Activated CD4-positive, alpha-beta T cell treated with anti-CD3 and anti-CD28 coated beads for 36 hours (primary cell): ENCODE measurements at regions of chr1 and their contacts with region 1.

Region 1: GRCh38 chr1:180178511-180179161 is 24.0 kb downstream of the QSOX1 start:
- DNase-seq: peak; percentile 80
- ATAC-seq: peak; percentile 61
- H3K4me3 Mint-ChIP-seq: no peak overlapping the region
- H3K27ac Mint-ChIP-seq: no peak overlapping the region
- H3K4me1 Mint-ChIP-seq: no peaks in the 10 kb centered on the region
- H3K27me3 Mint-ChIP-seq: no peaks in the 10 kb centered on the region

Region 2: GRCh38 chr1:179706339-179706941 is 472.2 kb before region 1 on chr1:
- CTCF ChIA-PET with region 1: interaction called, 10 read pairs
- POLR2A ChIA-PET with region 1: no interaction called
- intact Hi-C with region 1: loop called (anchors 1 to 5 kb)
- DNase-seq: peak; percentile 79
- ATAC-seq: peak; percentile 55
- H3K4me3 Mint-ChIP-seq: no peak overlapping the region
- H3K27ac Mint-ChIP-seq: peak overlapping the region; percentile 38
- H3K4me1 Mint-ChIP-seq: peaks cover 17% of the 10 kb centered on the region
- H3K27me3 Mint-ChIP-seq: no peaks in the 10 kb centered on the region

Region 3: GRCh38 chr1:179754042-179754624 is 424.5 kb before region 1 on chr1:
- CTCF ChIA-PET with region 1: no interaction called
- POLR2A ChIA-PET with region 1: no interaction called
- intact Hi-C with region 1: no loop called
- DNase-seq: no peak
- ATAC-seq: no peak
- H3K4me3 Mint-ChIP-seq: no peak overlapping the region
- H3K27ac Mint-ChIP-seq: no peak overlapping the region
- H3K4me1 Mint-ChIP-seq: no peaks in the 10 kb centered on the region
- H3K27me3 Mint-ChIP-seq: peaks cover 12% of the 10 kb centered on the region

Region 4: GRCh38 chr1:180070286-180070685 is 108.3 kb before region 1 on chr1:
- CTCF ChIA-PET with region 1: interaction called, 17 read pairs
- POLR2A ChIA-PET with region 1: no interaction called
- intact Hi-C with region 1: no loop called
- DNase-seq: no peak
- ATAC-seq: no peak
- H3K4me3 Mint-ChIP-seq: no peak overlapping the region
- H3K27ac Mint-ChIP-seq: no peak overlapping the region
- H3K4me1 Mint-ChIP-seq: no peaks in the 10 kb centered on the region
- H3K27me3 Mint-ChIP-seq: no peaks in the 10 kb centered on the region

Region 5: DNA sequence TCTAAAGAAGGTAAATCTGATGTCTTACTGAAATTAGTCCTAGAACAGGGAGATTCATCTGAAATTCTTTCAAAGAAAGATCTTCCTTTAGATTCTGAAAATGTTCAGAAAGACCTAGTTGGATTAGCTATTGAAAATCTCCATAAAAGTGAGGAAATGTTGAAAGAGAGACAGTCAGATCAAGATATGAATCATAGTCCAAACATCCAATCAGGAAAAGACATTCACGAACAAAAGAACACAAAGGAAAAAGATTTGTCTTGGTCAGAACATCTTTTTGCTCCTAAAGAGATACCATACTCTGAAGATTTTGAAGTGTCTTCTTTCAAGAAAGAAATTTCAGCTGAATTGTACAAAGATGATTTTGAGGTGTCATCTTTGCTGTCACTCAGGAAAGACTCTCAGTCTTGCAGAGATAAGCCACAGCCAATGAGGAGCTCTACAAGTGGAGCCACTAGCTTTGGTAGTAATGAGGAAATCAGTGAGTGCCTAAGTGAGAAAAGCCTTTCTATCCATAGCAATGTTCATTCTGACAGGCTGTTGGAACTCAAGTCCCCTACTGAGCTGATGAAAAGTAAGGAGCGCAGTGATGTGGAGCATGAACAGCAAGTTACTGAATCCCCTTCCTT is 85.6 kb before region 1 on chr1:
- CTCF ChIA-PET with region 1: interaction called, 10 read pairs
- POLR2A ChIA-PET with region 1: no interaction called
- intact Hi-C with region 1: no loop called
- DNase-seq: no peak
- ATAC-seq: peak; percentile 26
- H3K4me3 Mint-ChIP-seq: no peak overlapping the region
- H3K27ac Mint-ChIP-seq: peak overlapping the region; percentile 44
- H3K4me1 Mint-ChIP-seq: peaks cover 7% of the 10 kb centered on the region
- H3K27me3 Mint-ChIP-seq: no peaks in the 10 kb centered on the region

Region 6: DNA sequence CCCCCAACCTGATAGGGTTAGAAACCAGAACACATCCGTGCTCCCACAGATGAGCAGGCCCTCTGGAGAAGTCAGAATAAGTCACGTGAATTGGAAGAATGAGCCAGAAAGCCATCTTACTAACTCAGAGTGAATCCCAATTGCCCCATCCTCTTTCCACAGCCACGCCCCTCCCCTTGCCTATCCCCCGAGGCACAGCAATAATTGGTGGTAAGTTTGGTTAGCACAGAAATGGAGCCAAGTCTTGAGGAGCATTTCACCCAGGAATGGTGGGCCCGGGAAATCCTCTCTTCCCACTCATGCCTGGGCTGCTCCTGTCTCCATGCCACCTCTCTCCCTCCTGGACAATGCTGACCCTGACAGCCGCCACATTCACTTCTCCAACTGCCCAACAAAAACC is 53.2 kb before region 1 on chr1:
- CTCF ChIA-PET with region 1: interaction called, 11 read pairs
- POLR2A ChIA-PET with region 1: no interaction called
- intact Hi-C with region 1: no loop called
- DNase-seq: no peak
- ATAC-seq: no peak
- H3K4me3 Mint-ChIP-seq: no peak overlapping the region
- H3K27ac Mint-ChIP-seq: no peak overlapping the region
- H3K4me1 Mint-ChIP-seq: peaks cover 11% of the 10 kb centered on the region
- H3K27me3 Mint-ChIP-seq: no peaks in the 10 kb centered on the region

Region 7: DNA sequence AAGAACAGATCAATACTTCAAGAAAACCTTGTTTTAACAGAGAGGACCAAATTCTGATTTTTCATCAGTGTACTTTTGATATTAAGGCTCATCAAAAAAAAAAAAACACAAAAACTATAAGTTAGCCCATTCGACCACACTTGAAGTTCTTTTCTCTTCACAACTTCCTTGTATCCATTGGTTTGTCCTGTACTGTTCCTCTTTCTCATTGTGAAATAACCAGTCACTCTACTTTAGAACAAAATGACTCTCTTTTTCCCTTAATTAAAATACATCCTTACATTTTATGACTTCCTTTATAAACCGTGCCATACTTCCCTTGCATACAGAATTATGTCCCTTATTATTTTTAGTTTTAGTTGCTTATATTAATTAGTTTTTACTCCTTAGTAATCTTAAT is 15.6 kb before region 1 on chr1:
- CTCF ChIA-PET with region 1: interaction called, 50 read pairs
- POLR2A ChIA-PET with region 1: interaction called, 3 read pairs
- intact Hi-C with region 1: no loop called
- DNase-seq: no peak
- ATAC-seq: no peak
- H3K4me3 Mint-ChIP-seq: no peak overlapping the region
- H3K27ac Mint-ChIP-seq: no peak overlapping the region
- H3K4me1 Mint-ChIP-seq: peaks cover 4% of the 10 kb centered on the region
- H3K27me3 Mint-ChIP-seq: no peaks in the 10 kb centered on the region

Region 8: GRCh38 chr1:180262572-180263488 is 84.2 kb after region 1 on chr1:
- CTCF ChIA-PET with region 1: no interaction called
- POLR2A ChIA-PET with region 1: no interaction called
- intact Hi-C with region 1: no loop called
- DNase-seq: no peak
- ATAC-seq: no peak
- H3K4me3 Mint-ChIP-seq: no peak overlapping the region
- H3K27ac Mint-ChIP-seq: no peak overlapping the region
- H3K4me1 Mint-ChIP-seq: no peaks in the 10 kb centered on the region
- H3K27me3 Mint-ChIP-seq: peaks cover 7% of the 10 kb centered on the region